CD4-positive, alpha-beta memory T cell (primary cell): ENCODE measurements at regions of chr16 and their contacts with region 1.

Region 1: GRCh38 chr16:67816240-67817031 is 9.7 kb downstream of the TSNAXIP1 start:
- DNase-seq: peak; percentile 83 to 92 (median 85)
- H3K4me3 ChIP-seq: no peak overlapping the region
- H3K4me3 Mint-ChIP-seq: peak overlapping the region in 1 of 8 donors; percentile 61
- H3K27ac ChIP-seq: no peak overlapping the region
- H3K27ac Mint-ChIP-seq: peak overlapping the region in 4 of 7 donors; percentile 75 to 92 (median 82)
- H3K4me1 ChIP-seq: no peaks in the 10 kb centered on the region
- H3K4me1 Mint-ChIP-seq: peaks cover 0 to 8% (median 5%) of the 10 kb centered on the region in 4 donors
- H3K27me3 ChIP-seq: no peaks in the 10 kb centered on the region
- H3K27me3 Mint-ChIP-seq: no peaks in the 10 kb centered on the region

Region 2: GRCh38 chr16:67672739-67673662 is 143.4 kb before region 1 on chr16:
- CTCF ChIA-PET with region 1: interaction called, 29 read pairs
- POLR2A ChIA-PET with region 1: no interaction called
- intact Hi-C with region 1: no loop called
- DNase-seq: peak; percentile 40 to 60 (median 53)
- H3K4me3 ChIP-seq: no peak overlapping the region
- H3K4me3 Mint-ChIP-seq: no peak overlapping the region
- H3K27ac ChIP-seq: no peak overlapping the region
- H3K27ac Mint-ChIP-seq: peak overlapping the region in 6 of 7 donors; percentile 30 to 77 (median 36)
- H3K4me1 ChIP-seq: peaks cover 5% of the 10 kb centered on the region
- H3K4me1 Mint-ChIP-seq: peaks cover 4 to 21% (median 9%) of the 10 kb centered on the region in 4 donors
- H3K27me3 ChIP-seq: no peaks in the 10 kb centered on the region
- H3K27me3 Mint-ChIP-seq: no peaks in the 10 kb centered on the region

Region 3: DNA sequence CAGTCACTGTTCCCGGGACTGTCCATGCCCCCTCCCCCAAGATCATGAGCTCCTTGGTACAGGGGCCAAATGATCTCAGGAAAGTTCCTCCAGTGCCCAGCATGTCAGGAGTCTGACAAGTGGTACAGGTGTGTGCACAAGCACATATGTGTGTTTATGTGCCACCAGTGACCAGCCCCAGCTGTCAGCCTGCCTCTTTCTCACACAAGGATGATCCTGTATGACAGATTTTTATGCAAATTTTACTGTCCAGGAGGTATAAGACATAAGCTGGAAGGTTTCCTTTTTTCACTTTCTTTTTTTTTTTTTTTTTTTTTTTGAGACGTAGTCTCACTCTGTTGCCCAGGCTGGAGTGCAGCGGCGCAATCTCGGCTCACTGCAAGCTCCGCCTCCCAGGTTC is 66.0 kb before region 1 on chr16:
- CTCF ChIA-PET with region 1: no interaction called
- POLR2A ChIA-PET with region 1: no interaction called
- intact Hi-C with region 1: no loop called
- DNase-seq: no peak
- H3K4me3 ChIP-seq: no peak overlapping the region
- H3K4me3 Mint-ChIP-seq: no peak overlapping the region
- H3K27ac ChIP-seq: no peak overlapping the region
- H3K27ac Mint-ChIP-seq: peak overlapping the region in 4 of 7 donors; percentile 31 to 86 (median 82)
- H3K4me1 ChIP-seq: no peaks in the 10 kb centered on the region
- H3K4me1 Mint-ChIP-seq: peaks cover 0 to 3% (median 1%) of the 10 kb centered on the region in 4 donors
- H3K27me3 ChIP-seq: no peaks in the 10 kb centered on the region
- H3K27me3 Mint-ChIP-seq: no peaks in the 10 kb centered on the region

Region 4: GRCh38 chr16:67841764-67842508 is 25.5 kb after region 1 on chr16 and contains the start of gene THAP11:
- CTCF ChIA-PET with region 1: interaction called, 14 read pairs
- POLR2A ChIA-PET with region 1: interaction called, 4 read pairs
- intact Hi-C with region 1: loop called (anchors 1 kb)
- DNase-seq: peak; percentile 94 to 98 (median 95)
- H3K4me3 ChIP-seq: peak within 1 kb of the TSS; percentile 74 to 99
- H3K4me3 Mint-ChIP-seq: peak within 1 kb of the TSS; percentile 93 to 98 (median 96)
- H3K27ac ChIP-seq: peak within 1 kb of the TSS; percentile 98
- H3K27ac Mint-ChIP-seq: peak within 1 kb of the TSS; percentile 97 to 99 (median 98)
- H3K4me1 ChIP-seq: peaks cover 38% of the 10 kb centered on the region
- H3K4me1 Mint-ChIP-seq: peaks cover 25 to 48% (median 36%) of the 10 kb centered on the region in 4 donors
- H3K27me3 ChIP-seq: no peaks in the 10 kb centered on the region
- H3K27me3 Mint-ChIP-seq: no peaks in the 10 kb centered on the region
- total RNA-seq, gene THAP11: 56.8 to 58.4 TPM

Region 5: GRCh38 chr16:67865316-67865715 is 48.9 kb after region 1 on chr16:
- CTCF ChIA-PET with region 1: interaction called, 46 read pairs
- POLR2A ChIA-PET with region 1: no interaction called
- intact Hi-C with region 1: loop called (anchors 1 kb)
- DNase-seq: no peak
- H3K4me3 ChIP-seq: no peak overlapping the region
- H3K4me3 Mint-ChIP-seq: no peak overlapping the region
- H3K27ac ChIP-seq: no peak overlapping the region
- H3K27ac Mint-ChIP-seq: peak overlapping the region in 2 of 7 donors; percentile 30 to 59
- H3K4me1 ChIP-seq: no peaks in the 10 kb centered on the region
- H3K4me1 Mint-ChIP-seq: peaks cover 5 to 15% (median 9%) of the 10 kb centered on the region in 4 donors
- H3K27me3 ChIP-seq: no peaks in the 10 kb centered on the region
- H3K27me3 Mint-ChIP-seq: no peaks in the 10 kb centered on the region

Region 6: DNA sequence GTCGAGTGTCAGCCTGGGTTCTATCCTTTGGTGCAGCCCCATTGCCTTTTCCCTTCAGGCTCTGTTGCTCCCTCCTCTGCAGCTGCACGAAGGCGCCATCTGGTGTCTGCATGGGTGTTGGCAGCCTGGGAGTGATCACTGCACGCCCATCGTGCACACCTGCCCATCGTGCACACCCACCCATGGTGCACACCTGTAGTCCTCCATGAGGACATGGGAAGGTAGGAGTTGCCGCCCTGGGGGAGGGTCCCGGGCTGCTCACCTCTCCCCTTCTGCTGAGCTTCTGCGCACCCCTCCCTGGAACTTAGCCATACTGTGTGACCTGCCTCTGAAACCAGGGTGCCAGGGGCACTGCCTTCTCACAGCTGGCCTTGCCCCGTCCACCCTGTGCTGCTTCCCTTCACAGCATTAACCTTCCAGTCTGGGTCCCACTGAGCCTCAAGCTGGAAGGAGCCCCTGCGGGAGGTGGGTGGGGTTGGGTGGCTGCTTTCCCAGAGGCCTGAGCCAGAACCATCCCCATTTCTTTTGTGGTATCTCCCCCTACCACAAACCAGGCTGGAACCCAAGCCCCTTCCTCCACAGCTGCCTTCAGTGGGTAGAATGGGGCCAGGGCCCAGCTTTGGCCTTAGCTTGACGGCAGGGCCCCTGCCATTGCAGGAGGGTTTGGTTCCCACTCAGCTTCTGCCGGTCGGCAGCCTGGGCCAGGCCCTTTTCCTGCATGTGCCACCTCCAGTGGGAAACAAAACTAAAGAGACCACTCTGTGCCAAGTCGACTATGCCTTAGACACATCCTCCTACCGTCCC is 112.3 kb after region 1 on chr16:
- CTCF ChIA-PET with region 1: interaction called, 9 read pairs
- POLR2A ChIA-PET with region 1: interaction called, 3 read pairs
- intact Hi-C with region 1: loop called (anchors 1 kb)
- DNase-seq: peak; percentile 70 to 75 (median 72)
- H3K4me3 ChIP-seq: no peak overlapping the region
- H3K4me3 Mint-ChIP-seq: no peak overlapping the region
- H3K27ac ChIP-seq: no peak overlapping the region
- H3K27ac Mint-ChIP-seq: peak overlapping the region; percentile 22 to 74 (median 69)
- H3K4me1 ChIP-seq: peaks cover 7% of the 10 kb centered on the region
- H3K4me1 Mint-ChIP-seq: peaks cover 3 to 16% (median 8%) of the 10 kb centered on the region in 4 donors
- H3K27me3 ChIP-seq: no peaks in the 10 kb centered on the region
- H3K27me3 Mint-ChIP-seq: no peaks in the 10 kb centered on the region

Region 7: GRCh38 chr16:68100488-68100887 is 284.1 kb after region 1 on chr16:
- CTCF ChIA-PET with region 1: no interaction called
- POLR2A ChIA-PET with region 1: no interaction called
- intact Hi-C with region 1: no loop called
- DNase-seq: no peak
- H3K4me3 ChIP-seq: no peak overlapping the region
- H3K4me3 Mint-ChIP-seq: peak overlapping the region in 6 of 8 donors; percentile 2 to 72 (median 48)
- H3K27ac ChIP-seq: no peak overlapping the region
- H3K27ac Mint-ChIP-seq: peak overlapping the region in 6 of 7 donors; percentile 5 to 80 (median 21)
- H3K4me1 ChIP-seq: peaks cover 80% of the 10 kb centered on the region
- H3K4me1 Mint-ChIP-seq: peaks cover 53 to 92% (median 69%) of the 10 kb centered on the region in 4 donors
- H3K27me3 ChIP-seq: no peaks in the 10 kb centered on the region
- H3K27me3 Mint-ChIP-seq: no peaks in the 10 kb centered on the region

Region 8: GRCh38 chr16:68229431-68230198 is 413.2 kb after region 1 on chr16:
- CTCF ChIA-PET with region 1: interaction called, 9 read pairs
- POLR2A ChIA-PET with region 1: no interaction called
- intact Hi-C with region 1: loop called (anchors 2 kb)
- DNase-seq: peak in 4 of 5 donors; percentile 44 to 55 (median 52)
- H3K4me3 ChIP-seq: no peak overlapping the region
- H3K4me3 Mint-ChIP-seq: peak overlapping the region in 1 of 8 donors; percentile 31
- H3K27ac ChIP-seq: no peak overlapping the region
- H3K27ac Mint-ChIP-seq: peak overlapping the region in 6 of 7 donors; percentile 10 to 89 (median 51)
- H3K4me1 ChIP-seq: peaks cover 23% of the 10 kb centered on the region
- H3K4me1 Mint-ChIP-seq: peaks cover 21 to 51% (median 34%) of the 10 kb centered on the region in 4 donors
- H3K27me3 ChIP-seq: no peaks in the 10 kb centered on the region
- H3K27me3 Mint-ChIP-seq: no peaks in the 10 kb centered on the region